ENCODE measurements at regions of chr2 and their contacts with region 1.

Region 1: GRCh38 chr2:111120253-111121027 is at the start of gene BCL2L11:
- DNase-seq: peak; percentile 97
- ATAC-seq: peak; percentile 85
- total RNA-seq, gene BCL2L11: 9.1 TPM

Region 2: DNA sequence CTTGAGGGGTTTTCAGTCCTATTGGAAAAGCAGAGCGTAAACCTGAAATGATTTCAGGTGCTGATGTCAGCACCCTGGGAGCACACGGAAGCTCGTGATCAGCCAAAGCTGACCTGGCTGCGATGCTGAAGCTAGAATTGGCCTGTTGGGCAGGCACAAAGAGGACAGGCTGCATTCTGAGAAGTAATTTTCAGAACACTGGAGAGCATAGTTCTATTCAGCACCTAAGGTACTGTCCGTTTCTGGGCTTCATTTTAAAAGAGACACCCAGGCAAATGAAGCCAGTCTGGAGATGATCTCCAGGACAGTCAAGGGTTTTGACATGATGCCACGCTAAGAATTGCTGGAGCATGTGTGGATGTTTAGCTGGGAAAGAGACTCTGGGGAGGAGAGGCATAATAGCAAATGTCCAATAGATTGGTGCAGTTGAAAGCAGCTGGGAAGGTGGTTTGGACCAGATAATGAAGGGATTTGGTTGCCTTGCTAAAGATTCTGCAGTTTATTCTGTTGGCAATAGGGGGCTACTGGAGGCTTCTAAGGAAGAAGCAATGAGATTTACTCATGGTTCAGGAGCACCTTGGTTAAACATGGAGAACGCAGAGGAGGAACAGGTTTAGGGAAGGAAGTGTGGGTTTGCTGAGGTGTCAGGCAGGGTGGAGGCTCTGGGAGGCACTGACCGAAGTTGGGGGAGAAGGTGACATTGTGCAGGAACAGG is 301.5 kb before region 1 on chr2:
- intact Hi-C with region 1: loop called (anchors 10 kb)
- DNase-seq: no peak
- ATAC-seq: no peak

Region 3: DNA sequence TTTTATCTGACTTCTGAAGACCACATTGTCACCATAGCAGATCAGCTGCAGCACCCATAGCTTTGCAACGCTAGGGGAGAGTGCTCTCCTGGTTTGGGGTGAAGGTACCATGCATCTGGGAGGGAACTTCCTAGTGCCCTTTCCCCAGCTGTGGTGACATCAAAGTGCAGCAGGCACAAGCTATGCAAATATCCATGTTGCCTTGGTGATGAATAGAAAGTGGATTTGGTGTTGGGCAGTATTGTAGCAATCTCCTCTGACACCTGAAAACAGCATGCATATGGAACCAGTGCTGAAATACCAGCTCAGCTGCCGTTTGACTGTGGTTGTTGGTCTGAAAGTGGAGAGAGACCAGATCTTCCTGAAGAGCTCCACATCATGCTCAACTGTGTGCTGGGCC is 37.4 kb after region 1 on chr2:
- intact Hi-C with region 1: loop called (anchors 5 kb)
- DNase-seq: no peak
- ATAC-seq: no peak

Region 4: DNA sequence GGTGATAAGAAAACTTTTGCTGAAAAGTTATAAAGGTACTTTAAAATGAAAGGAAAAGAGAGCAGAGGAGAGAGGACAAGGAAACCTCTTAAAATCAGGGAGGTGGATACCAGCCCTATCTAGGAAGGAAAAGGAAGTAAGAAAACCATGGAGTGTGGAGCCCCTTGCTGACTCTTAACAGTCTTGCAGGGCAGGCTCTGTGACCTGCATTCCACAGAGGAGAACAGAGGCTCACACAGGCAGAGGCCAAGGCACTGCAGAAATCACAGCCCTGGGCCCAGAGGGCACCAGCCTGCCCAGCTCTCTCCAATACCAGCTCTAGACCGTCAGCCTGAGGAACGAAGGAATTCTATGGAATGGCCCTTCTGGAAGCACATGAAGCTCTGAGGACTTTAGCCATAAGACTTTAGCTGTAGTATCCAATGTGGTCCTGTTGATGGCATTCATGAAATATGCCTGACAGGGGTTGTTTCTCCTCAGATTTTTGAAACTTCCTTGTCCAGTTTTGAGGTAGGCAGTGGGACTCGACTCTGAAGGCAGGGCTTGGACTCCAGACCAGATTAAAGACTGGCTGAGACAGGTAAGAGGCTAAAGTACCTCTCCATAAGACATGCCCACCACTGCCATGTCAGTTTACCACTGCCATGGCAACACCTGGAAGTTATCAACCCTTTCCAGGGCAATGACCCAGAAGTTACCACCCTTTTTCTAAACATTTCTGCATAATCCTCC is 547.3 kb after region 1 on chr2:
- intact Hi-C with region 1: loop called (anchors 2 kb)
- DNase-seq: no peak
- ATAC-seq: peak; percentile 89